ENCODE measurements at regions of chr19 and their contacts with region 1.

Region 1: GRCh38 chr19:3606690-3607289 is at the start of gene TBXA2R:
- DNase-seq: peak; percentile 48 to 84 (median 59)
- ATAC-seq: peak; percentile 28 to 54
- H3K4me3 Mint-ChIP-seq: peak within 1 kb of the TSS in 9 of 10 donors; percentile 60 to 91 (median 75)
- H3K27ac Mint-ChIP-seq: peak within 1 kb of the TSS; percentile 49 to 94 (median 82)
- H3K4me1 Mint-ChIP-seq: peaks cover 11 to 33% (median 19%) of the 10 kb centered on the region in 4 donors
- H3K27me3 Mint-ChIP-seq: no peaks in the 10 kb centered on the region
- polyA plus RNA-seq, gene TBXA2R: 11.7 to 26.9 (median 23.9) TPM

Region 2: GRCh38 chr19:3586124-3586626 is 20.6 kb before region 1 on chr19:
- POLR2A ChIA-PET with region 1: interaction called, 16 read pairs
- DNase-seq: peak; percentile 26 to 79 (median 56)
- ATAC-seq: peak; percentile 60 to 72
- H3K4me3 Mint-ChIP-seq: peak overlapping the region; percentile 56 to 79 (median 66)
- H3K27ac Mint-ChIP-seq: peak overlapping the region in 2 of 10 donors; percentile 19 to 43
- H3K4me1 Mint-ChIP-seq: peaks cover 0 to 3% (median 0%) of the 10 kb centered on the region in 4 donors
- H3K27me3 Mint-ChIP-seq: no peaks in the 10 kb centered on the region

Region 3: DNA sequence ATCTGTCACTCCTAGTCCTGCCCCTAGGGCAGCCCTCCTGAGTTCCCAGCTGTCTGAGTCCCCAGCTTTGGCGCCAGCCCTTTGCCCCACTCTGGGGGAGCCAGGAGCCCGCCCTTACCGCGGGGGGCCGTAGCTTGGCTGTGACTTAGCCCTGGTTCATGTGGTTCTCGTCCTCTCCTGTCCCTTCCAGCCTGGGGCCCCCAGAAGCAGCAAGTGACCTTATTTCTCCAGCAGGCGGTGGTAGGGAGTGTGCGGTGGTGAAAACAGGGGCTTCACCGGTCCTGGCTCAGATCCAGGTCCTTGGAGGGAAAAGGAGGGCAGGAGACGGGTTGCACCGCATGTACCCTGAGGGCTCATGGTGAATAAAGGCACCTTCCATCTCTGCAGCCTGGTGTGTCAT is 13.6 kb before region 1 on chr19:
- POLR2A ChIA-PET with region 1: interaction called, 13 read pairs
- DNase-seq: no peak
- ATAC-seq: no peak
- H3K4me3 Mint-ChIP-seq: no peak overlapping the region
- H3K27ac Mint-ChIP-seq: peak overlapping the region in 2 of 10 donors; percentile 40 to 57
- H3K4me1 Mint-ChIP-seq: peaks cover 0 to 5% (median 2%) of the 10 kb centered on the region in 4 donors
- H3K27me3 Mint-ChIP-seq: no peaks in the 10 kb centered on the region

Measured in naive thymus-derived CD8-positive, alpha-beta T cell (primary cell).